ENCODE measurements at regions of chr20 and their contacts with region 1.

Region 1: DNA sequence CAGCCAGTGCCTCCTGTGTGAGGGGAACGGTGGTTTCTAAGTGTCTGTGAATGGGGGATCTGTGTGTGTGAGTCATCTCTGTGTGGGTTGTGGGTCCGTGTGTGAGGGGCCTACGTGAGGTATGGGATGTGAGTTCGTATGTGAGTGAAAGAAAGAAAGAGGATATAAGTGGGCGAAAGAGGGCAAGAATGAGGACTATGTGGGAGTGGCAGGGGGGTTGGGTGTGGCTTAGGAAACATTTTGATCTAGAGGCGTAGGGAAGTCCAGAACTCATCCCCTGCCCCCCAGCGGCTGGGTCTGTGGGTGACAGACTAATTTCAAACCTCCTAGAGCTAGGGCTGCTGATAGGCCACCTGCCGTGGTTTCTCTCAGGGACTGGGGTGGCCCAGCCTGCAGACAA is 35.5 kb downstream of the DHX35 start:
- DNase-seq: peak; percentile 83
- ATAC-seq: peak; percentile 89
- H3K4me3 Mint-ChIP-seq: no peak overlapping the region
- H3K27ac Mint-ChIP-seq: peak overlapping the region; percentile 19
- H3K4me1 Mint-ChIP-seq: peaks cover 28% of the 10 kb centered on the region
- H3K27me3 Mint-ChIP-seq: no peaks in the 10 kb centered on the region

Region 2: GRCh38 chr20:39009348-39009747 is 11.7 kb after region 1 on chr20:
- CTCF ChIA-PET with region 1: interaction called, 12 read pairs
- POLR2A ChIA-PET with region 1: no interaction called
- intact Hi-C with region 1: no loop called
- DNase-seq: no peak
- ATAC-seq: no peak
- H3K4me3 Mint-ChIP-seq: no peak overlapping the region
- H3K27ac Mint-ChIP-seq: no peak overlapping the region
- H3K4me1 Mint-ChIP-seq: peaks cover 13% of the 10 kb centered on the region
- H3K27me3 Mint-ChIP-seq: no peaks in the 10 kb centered on the region

Region 3: DNA sequence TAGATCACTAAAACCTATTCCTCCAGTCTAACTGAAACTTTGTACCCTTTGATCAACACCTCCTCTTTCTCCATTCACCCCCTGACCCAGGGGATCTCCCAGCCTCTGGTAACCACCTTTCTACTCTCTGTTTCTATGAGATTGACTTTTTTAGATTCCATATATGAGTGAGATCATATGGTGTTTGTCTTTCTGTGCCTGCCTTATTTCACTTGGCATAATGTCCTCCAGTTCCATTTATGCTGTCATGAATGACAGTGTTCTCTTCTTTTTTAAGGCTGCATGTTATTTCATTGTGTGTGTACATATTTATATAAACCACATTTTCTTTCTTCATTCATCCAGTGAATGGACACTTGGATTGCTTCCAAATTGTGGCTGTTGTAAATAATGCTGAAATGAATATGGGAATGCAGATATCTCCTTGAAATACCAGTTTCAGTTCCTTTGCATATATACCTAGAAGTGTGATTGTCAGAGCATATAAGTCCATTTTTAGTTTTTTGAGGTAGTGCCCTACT is 22.2 kb after region 1 on chr20:
- CTCF ChIA-PET with region 1: no interaction called
- POLR2A ChIA-PET with region 1: no interaction called
- intact Hi-C with region 1: loop called in 1 of 2 experiments (anchors 1 kb)
- DNase-seq: peak; percentile 74
- ATAC-seq: peak; percentile 89
- H3K4me3 Mint-ChIP-seq: no peak overlapping the region
- H3K27ac Mint-ChIP-seq: peak overlapping the region; percentile 55
- H3K4me1 Mint-ChIP-seq: peaks cover 57% of the 10 kb centered on the region
- H3K27me3 Mint-ChIP-seq: no peaks in the 10 kb centered on the region